ENCODE measurements at regions of chr1 and their contacts with region 1.

Region 1: GRCh38 chr1:5514519-5515183 is 477.6 kb downstream of the NPHP4 start:
- DNase-seq: peak; percentile 63 to 90 (median 87)
- ATAC-seq: peak; percentile 56 to 74
- H3K4me3 ChIP-seq: no peak overlapping the region
- H3K27ac ChIP-seq: no peak overlapping the region
- H3K4me1 ChIP-seq: no peaks in the 10 kb centered on the region
- H3K27me3 ChIP-seq: no peaks in the 10 kb centered on the region

Region 2: DNA sequence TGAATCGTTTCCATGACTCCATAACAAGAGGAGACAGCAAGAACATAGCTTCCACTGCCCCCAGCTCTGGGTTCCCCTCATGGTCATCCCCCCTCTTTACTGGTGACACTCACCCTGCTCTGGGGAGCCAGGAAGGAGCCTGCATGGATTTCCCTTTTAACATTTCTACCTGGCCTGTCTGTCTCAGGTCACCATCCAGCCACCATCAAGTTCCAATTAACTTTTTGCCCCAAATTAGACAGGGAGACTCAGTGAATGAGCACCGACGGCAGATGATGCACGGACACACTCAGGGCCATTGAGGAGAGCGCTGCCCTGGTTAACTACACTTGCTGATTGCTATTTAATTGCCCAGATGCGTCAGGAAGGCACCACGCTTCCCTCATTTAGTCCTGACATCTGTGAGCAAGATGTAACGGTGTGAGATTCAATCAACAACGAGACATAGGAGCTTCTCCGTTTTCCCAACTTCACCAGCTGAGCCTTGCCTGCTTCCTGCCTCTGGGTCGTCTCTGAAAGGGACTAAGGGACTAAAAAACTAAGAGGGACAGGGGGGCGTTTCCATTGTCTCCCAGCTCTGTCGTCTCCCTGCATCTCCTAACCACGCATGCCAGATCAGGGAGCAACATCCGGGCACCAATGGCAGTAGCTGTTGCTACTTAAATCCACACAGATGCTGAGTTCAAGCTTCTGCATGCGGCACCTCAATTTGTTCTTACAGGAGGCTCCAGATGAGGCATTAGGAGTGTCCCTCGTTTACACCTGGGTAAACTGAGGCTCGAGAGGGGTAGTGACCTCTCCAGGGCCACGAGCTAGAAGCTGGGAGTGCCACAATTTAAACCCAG is 50.9 kb after region 1 on chr1:
- intact Hi-C with region 1: no loop called
- DNase-seq: no peak
- ATAC-seq: no peak
- H3K4me3 ChIP-seq: no peak overlapping the region
- H3K27ac ChIP-seq: no peak overlapping the region
- H3K4me1 ChIP-seq: no peaks in the 10 kb centered on the region
- H3K27me3 ChIP-seq: no peaks in the 10 kb centered on the region

Region 3: GRCh38 chr1:5915587-5916571 is 401.2 kb after region 1 on chr1:
- intact Hi-C with region 1: loop called in 3 of 4 experiments (anchors 2 to 10 kb)
- DNase-seq: no peak
- ATAC-seq: peak; percentile 39 to 44
- H3K4me3 ChIP-seq: no peak overlapping the region
- H3K27ac ChIP-seq: no peak overlapping the region
- H3K4me1 ChIP-seq: no peaks in the 10 kb centered on the region
- H3K27me3 ChIP-seq: no peaks in the 10 kb centered on the region

Region 4: DNA sequence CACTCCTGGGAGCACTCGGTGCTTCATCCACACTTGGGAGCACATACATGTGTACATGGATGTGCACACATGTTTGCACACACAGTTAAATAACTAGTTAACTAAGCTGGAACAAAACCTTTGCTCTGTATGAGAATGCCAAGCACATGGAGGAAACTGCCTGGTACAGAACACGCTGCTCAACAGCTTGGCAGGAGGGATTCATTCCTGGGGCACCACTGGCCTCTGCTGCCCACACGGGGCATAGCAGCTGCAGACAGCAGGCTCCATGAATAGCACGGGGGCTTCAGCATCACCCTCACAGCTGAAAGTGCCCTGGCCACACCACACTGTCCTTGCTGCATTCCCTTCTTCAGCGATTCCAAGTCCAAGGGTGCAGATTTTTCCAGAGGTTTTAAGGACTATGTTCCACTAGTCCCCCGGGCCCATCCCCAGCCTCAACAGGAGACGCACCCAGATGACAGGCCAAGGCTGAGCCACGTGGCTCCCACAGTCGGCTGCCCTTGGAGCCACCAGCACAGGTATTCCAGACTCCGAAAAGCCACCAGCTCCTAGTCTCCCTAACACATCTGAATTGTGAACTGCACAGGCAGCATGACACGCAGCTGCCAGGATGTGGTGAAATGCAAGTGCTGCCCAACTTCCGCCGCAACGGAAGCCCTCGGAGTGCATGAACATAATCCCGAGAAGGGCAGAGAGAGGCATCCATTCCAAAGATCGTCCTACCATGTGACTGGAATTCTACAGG is 460.7 kb after region 1 on chr1:
- intact Hi-C with region 1: loop called in 1 of 4 experiments (anchors 10 kb)
- DNase-seq: peak in 2 of 3 donors; percentile 70 to 75
- ATAC-seq: peak; percentile 68 to 73
- H3K4me3 ChIP-seq: no peak overlapping the region
- H3K27ac ChIP-seq: no peak overlapping the region
- H3K4me1 ChIP-seq: no peaks in the 10 kb centered on the region
- H3K27me3 ChIP-seq: no peaks in the 10 kb centered on the region

Measured in right cardiac atrium (tissue), 5 donors.